ENCODE measurements at regions of chr15 and their contacts with region 1.

Region 1: DNA sequence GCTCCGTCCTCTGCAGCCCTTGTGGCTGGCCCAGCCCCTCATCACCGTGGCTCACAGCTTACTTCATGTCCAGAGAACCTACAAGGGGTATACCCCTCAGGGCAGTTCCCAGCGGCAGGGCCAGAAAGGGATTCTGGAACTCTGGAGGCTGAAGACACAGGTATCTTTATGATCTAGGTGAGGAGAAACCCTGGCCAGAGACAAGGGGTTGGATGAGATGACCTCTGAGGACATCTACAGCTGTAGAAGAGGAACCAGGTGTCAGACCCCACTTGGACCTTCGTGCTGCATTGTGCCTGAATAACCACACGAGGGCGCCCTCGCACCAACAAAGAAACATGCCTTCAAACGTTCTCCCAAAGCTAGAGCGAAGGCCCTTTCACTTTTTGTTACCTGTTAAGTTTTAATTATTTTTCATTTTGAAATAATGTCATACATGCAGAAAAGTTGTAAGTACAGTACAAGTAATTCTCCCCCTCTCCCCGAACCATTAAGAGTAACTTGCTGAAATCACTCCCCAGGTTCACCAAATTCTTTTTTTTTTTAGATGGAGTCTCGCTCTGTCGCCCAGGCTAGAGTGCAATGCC is 118.7 kb upstream of the SMAD3 start:
- DNase-seq: peak; percentile 56 to 89 (median 74)
- ATAC-seq: peak; percentile 82
- H3K4me3 ChIP-seq: no peak overlapping the region
- H3K4me3 Mint-ChIP-seq: no peak overlapping the region
- H3K27ac ChIP-seq: no peak overlapping the region
- H3K27ac Mint-ChIP-seq: no peak overlapping the region
- H3K4me1 ChIP-seq: no peaks in the 10 kb centered on the region
- H3K4me1 Mint-ChIP-seq: peaks cover 3% of the 10 kb centered on the region
- H3K27me3 ChIP-seq: peaks cover 0 to 2% of the 10 kb centered on the region in 2 experiments
- H3K27me3 Mint-ChIP-seq: no peaks in the 10 kb centered on the region
- CTCF ChIP-seq: peak; percentile 97

Region 2: GRCh38 chr15:66433726-66434125 is 512.9 kb before region 1 on chr15:
- CTCF ChIA-PET with region 1: no interaction called
- POLR2A ChIA-PET with region 1: no interaction called
- intact Hi-C with region 1: no loop called
- DNase-seq: no peak
- ATAC-seq: no peak
- H3K4me3 ChIP-seq: no peak overlapping the region
- H3K4me3 Mint-ChIP-seq: no peak overlapping the region
- H3K27ac ChIP-seq: no peak overlapping the region
- H3K27ac Mint-ChIP-seq: peak overlapping the region; percentile 60
- H3K4me1 ChIP-seq: peaks cover 2% of the 10 kb centered on the region
- H3K4me1 Mint-ChIP-seq: peaks cover 48% of the 10 kb centered on the region
- H3K27me3 ChIP-seq: no peaks in the 10 kb centered on the region
- H3K27me3 Mint-ChIP-seq: no peaks in the 10 kb centered on the region
- CTCF ChIP-seq: no peak

Region 3: GRCh38 chr15:66504563-66505429 is 441.9 kb before region 1 on chr15 and contains the starts of genes RPL4 and ZWILCH:
- CTCF ChIA-PET with region 1: no interaction called
- POLR2A ChIA-PET with region 1: no interaction called
- intact Hi-C with region 1: no loop called
- DNase-seq: peak; percentile 67 to 92 (median 80)
- ATAC-seq: peak; percentile 86
- H3K4me3 ChIP-seq: peak within 1 kb of the TSS; percentile 88 to 95
- H3K4me3 Mint-ChIP-seq: peak within 1 kb of the TSS; percentile 100
- H3K27ac ChIP-seq: peak within 1 kb of the TSS; percentile 90 to 97
- H3K27ac Mint-ChIP-seq: peak within 1 kb of the TSS; percentile 99
- H3K4me1 ChIP-seq: peaks cover 32% of the 10 kb centered on the region
- H3K4me1 Mint-ChIP-seq: peaks cover 44% of the 10 kb centered on the region
- H3K27me3 ChIP-seq: no peaks in the 10 kb centered on the region
- H3K27me3 Mint-ChIP-seq: no peaks in the 10 kb centered on the region
- CTCF ChIP-seq: no peak
- total RNA-seq, gene RPL4: 4,516 to 4,651 TPM
- total RNA-seq, gene ZWILCH: 7.9 to 8.5 TPM

Region 4: DNA sequence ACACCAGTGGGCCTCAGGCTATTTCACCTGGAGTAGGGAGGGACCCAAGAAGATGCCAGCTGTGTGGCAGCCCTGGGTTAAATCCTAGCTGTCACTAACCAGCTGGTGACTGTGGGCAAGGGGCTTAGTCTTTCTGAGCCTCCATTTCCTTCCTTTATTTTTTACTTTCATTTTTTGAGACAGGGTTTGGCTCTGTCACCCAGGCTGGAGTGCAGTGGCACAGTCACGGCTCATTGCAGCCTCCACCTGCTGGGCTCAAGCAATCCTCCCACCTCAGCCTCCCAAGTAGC is 10.7 kb after region 1 on chr15:
- CTCF ChIA-PET with region 1: interaction called, 11 read pairs
- POLR2A ChIA-PET with region 1: no interaction called
- intact Hi-C with region 1: no loop called
- DNase-seq: no peak
- ATAC-seq: no peak
- H3K4me3 ChIP-seq: no peak overlapping the region
- H3K4me3 Mint-ChIP-seq: no peak overlapping the region
- H3K27ac ChIP-seq: no peak overlapping the region
- H3K27ac Mint-ChIP-seq: no peak overlapping the region
- H3K4me1 ChIP-seq: no peaks in the 10 kb centered on the region
- H3K4me1 Mint-ChIP-seq: no peaks in the 10 kb centered on the region
- H3K27me3 ChIP-seq: no peaks in the 10 kb centered on the region
- H3K27me3 Mint-ChIP-seq: peaks cover 3% of the 10 kb centered on the region
- CTCF ChIP-seq: no peak

Region 5: DNA sequence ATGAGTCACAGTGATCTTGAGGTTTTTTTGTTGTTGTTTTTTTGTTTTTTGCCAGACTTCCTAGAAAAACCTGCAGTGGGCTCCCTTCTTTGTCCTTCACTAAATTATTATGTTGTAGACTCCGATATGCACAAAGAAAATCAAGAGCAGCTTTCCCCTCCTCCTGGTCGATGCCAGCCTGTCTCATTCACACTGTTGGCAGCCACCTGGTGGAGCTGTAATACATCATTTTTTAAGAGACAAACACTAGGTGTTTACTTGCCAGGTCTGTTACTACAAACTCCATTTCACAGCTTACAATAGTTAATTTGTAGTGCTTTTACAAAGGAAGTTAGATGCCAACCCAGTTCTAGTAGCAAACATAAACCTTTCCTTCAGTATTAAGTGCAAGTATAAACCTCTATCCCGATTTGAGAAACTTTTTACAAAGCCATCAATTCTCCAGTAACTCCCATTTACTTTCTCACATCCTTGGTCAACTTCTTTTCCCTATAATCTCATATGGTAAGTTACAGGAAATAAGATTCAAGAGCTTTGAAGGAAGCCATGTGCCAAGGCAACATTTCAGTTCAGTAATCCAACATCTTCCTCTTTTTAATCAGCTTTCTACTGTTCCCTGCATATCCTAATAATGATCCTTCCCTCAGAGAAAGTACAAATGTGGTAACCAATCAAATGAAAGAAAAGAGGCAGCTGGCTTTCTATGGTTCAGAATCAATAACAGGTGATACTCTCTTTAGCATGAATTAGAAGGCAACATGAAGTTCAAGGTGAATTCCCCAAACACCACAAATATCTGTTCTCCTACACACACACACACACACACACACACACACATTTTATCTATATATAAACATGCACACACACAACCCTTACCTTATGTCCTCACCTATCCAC is 293.8 kb after region 1 on chr15:
- CTCF ChIA-PET with region 1: interaction called, 15 read pairs
- POLR2A ChIA-PET with region 1: no interaction called
- intact Hi-C with region 1: no loop called
- DNase-seq: peak in 5 of 9 experiments; percentile 20 to 59 (median 26)
- ATAC-seq: peak; percentile 66
- H3K4me3 ChIP-seq: no peak overlapping the region
- H3K4me3 Mint-ChIP-seq: peak overlapping the region; percentile 30
- H3K27ac ChIP-seq: peak overlapping the region in 1 of 2 experiments; percentile 66
- H3K27ac Mint-ChIP-seq: peak overlapping the region; percentile 41
- H3K4me1 ChIP-seq: peaks cover 27% of the 10 kb centered on the region
- H3K4me1 Mint-ChIP-seq: peaks cover 53% of the 10 kb centered on the region
- H3K27me3 ChIP-seq: no peaks in the 10 kb centered on the region
- H3K27me3 Mint-ChIP-seq: no peaks in the 10 kb centered on the region
- CTCF ChIP-seq: no peak

Region 6: GRCh38 chr15:67311731-67312130 is 365.1 kb after region 1 on chr15:
- CTCF ChIA-PET with region 1: interaction called, 111 read pairs
- POLR2A ChIA-PET with region 1: interaction called, 3 read pairs
- intact Hi-C with region 1: no loop called
- DNase-seq: no peak
- ATAC-seq: no peak
- H3K4me3 ChIP-seq: no peak overlapping the region
- H3K4me3 Mint-ChIP-seq: no peak overlapping the region
- H3K27ac ChIP-seq: no peak overlapping the region
- H3K27ac Mint-ChIP-seq: no peak overlapping the region
- H3K4me1 ChIP-seq: no peaks in the 10 kb centered on the region
- H3K4me1 Mint-ChIP-seq: no peaks in the 10 kb centered on the region
- H3K27me3 ChIP-seq: no peaks in the 10 kb centered on the region
- H3K27me3 Mint-ChIP-seq: no peaks in the 10 kb centered on the region
- CTCF ChIP-seq: no peak

Region 7: GRCh38 chr15:67833710-67834511 is 887.2 kb after region 1 on chr15:
- CTCF ChIA-PET with region 1: interaction called, 7 read pairs
- POLR2A ChIA-PET with region 1: no interaction called
- intact Hi-C with region 1: loop called (anchors 2 to 5 kb)
- DNase-seq: peak in 5 of 9 experiments; percentile 30 to 69 (median 47)
- ATAC-seq: peak; percentile 37
- H3K4me3 ChIP-seq: peak overlapping the region; percentile 42 to 51
- H3K4me3 Mint-ChIP-seq: peak overlapping the region; percentile 83
- H3K27ac ChIP-seq: no peak overlapping the region
- H3K27ac Mint-ChIP-seq: no peak overlapping the region
- H3K4me1 ChIP-seq: peaks cover 48% of the 10 kb centered on the region
- H3K4me1 Mint-ChIP-seq: peaks cover 51% of the 10 kb centered on the region
- H3K27me3 ChIP-seq: peaks cover 46 to 57% of the 10 kb centered on the region in 2 experiments
- H3K27me3 Mint-ChIP-seq: peaks cover 53% of the 10 kb centered on the region
- CTCF ChIP-seq: peak; percentile 40

Measured in CD8-positive, alpha-beta T cell (primary cell).